Lower leg skin (tissue), 4 donors: ENCODE measurements at regions of chr16 and their contacts with region 1.

Region 1: DNA sequence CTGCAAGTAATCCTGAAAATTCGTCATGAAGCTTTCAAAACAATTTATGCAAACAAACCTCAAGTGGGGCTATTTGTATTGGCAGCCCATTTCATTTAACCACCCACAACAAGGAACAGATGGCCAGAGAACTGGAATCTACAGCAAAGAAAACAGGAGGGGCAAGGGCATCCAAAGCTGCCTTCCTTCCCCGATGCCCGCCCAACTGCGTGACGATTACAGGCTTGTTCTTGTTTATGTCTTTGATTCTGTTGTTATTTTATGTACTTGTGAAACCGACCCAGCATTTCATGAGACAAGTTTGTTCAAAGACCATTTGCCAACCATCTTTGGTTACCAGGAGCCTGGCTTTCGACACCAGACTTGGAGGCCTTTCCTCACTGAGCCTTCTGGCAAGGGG is 59.1 kb upstream of the IRX6 start:
- DNase-seq: peak in 1 of 2 donors; percentile 74
- H3K4me3 ChIP-seq: no peak overlapping the region
- CTCF ChIP-seq: no peak
- POLR2A ChIP-seq: no peak

Region 2: DNA sequence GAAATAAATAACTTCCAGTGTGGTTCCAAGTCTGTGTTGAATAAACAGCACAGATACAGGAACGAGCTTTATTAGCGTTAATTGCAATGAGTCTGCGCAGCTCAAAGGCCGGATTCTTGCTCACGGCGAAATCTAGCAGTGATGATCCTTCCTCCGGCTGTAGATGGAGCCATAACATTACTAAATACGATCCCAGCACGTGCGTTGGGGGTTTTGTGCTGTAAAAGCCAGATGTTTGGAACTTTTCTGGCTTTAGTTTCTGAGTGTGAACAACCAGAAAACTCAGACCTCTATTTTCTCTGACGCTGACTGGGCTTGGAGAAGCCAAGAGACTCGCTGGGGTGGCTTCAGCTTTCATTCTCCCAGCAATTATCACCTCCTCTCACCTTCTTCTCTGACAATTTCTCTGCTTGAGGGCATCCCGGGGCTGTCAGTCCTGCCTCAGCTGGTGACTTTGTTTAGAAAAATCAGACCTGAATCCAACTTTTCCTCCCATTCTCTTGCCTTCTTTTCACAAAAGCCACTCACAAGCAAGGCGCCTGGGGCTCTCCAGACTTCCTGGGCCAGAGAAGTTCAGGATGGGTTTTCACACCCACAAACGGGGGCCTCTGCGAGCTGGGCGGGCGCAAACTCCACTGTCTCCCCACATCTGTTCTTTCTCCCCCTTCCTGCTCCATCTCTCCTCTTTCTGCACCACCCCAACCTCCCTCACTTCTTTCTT is 1714.8 kb before region 1 on chr16:
- intact Hi-C with region 1: loop called (anchors 10 kb)
- DNase-seq: peak; percentile 63 to 91
- H3K4me3 ChIP-seq: no peak overlapping the region
- CTCF ChIP-seq: no peak
- POLR2A ChIP-seq: no peak